ENCODE measurements at regions of chr1 and their contacts with region 1.

Region 1: DNA sequence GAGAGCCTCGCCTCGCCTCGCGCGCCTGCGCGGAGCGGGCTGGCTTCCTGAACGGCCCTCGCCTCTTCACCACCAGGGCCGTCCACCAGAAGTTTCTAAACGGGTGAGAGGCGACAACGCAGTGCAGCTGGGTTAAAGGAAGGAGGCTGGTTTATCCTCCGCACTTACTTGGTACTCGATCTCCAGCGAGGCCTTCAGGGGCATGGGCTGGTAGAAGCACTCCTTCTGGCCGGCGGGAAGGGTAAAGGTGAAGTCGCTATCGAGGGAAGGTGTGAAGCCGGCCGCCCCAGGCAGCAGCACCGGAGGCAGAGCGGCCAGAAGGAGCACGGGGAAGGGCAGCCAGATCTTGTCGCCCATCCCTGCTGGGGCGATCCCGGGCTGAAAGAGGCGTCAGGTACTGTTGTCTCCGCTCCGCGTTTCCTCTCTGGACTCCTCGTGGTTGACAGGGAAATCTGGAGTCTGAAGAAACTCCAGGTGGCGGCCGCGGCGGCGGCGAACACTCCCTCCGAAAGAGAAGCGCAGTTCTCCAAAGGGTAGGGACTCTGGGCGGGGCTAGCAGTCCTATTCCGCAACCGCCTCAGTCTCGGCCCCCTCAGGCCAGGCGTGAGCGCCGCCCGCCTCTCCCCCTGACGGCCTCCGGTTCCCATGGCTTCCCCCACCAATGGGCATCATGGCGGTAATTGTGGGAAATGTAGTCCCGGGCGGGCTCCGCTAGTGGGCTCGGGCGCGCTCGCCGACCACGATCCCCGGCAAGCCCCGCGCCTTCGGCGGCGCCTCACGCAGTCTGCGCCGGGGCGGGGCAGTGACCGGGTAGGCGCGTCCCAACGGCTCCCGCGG is at the start of gene TMED5:
- DNase-seq: peak; percentile 97 to 98 (median 98)
- H3K4me3 ChIP-seq: peak within 1 kb of the TSS; percentile 91
- H3K27ac ChIP-seq: peak within 1 kb of the TSS; percentile 82 to 100
- H3K4me1 ChIP-seq: peaks cover 5% of the 10 kb centered on the region
- H3K27me3 ChIP-seq: no peaks in the 10 kb centered on the region
- CTCF ChIP-seq: peak in 2 of 3 donors; percentile 49 to 60
- EP300 ChIP-seq: no peak
- POLR2A ChIP-seq: peak; percentile 96
- total RNA-seq, gene TMED5: 27.7 to 51.0 (median 37.1) TPM

Region 2: DNA sequence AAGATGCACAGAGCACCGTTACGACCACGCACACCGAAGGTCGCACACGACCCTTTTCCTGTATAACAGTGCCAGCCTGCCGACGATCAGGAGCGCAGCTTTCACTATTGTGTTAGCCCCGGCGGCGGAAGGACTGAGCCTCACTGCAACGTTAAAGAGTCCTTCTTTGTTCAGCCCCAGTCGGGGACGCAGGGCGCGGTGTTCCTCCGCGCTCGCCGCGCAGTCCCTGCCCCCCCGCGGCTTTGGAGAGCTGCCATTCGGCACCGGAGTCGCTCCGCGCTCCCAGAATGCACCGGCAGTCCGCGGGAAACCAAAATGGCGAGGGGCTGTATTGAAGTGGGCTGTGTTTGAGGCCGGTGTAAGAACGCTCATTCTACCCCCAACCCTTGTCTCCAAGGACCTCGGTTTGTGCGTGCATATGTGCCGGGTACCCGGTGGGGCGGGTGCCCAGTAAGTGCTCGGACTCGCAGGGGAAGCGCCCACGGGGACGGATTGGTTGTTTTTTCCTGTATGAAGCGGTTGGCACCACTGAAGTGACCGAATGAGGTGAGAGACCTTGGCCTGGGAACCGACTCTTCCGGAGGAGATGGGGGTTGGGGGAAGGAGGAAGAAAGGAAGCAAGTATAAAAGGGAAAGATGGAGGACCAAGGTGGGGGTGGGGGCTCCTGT is 101.0 kb before region 1 on chr1 and contains the start of gene MTF2:
- intact Hi-C with region 1: loop called in 1 of 4 experiments (anchors 2 kb)
- DNase-seq: peak; percentile 95 to 99 (median 98)
- H3K4me3 ChIP-seq: peak within 1 kb of the TSS; percentile 81
- H3K27ac ChIP-seq: peak within 1 kb of the TSS; percentile 68 to 70
- H3K4me1 ChIP-seq: no peaks in the 10 kb centered on the region
- H3K27me3 ChIP-seq: no peaks in the 10 kb centered on the region
- CTCF ChIP-seq: peak in 1 of 3 donors; percentile 18
- EP300 ChIP-seq: no peak
- POLR2A ChIP-seq: peak; percentile 70
- total RNA-seq, gene MTF2: 14.8 to 27.4 (median 25.2) TPM

Region 3: DNA sequence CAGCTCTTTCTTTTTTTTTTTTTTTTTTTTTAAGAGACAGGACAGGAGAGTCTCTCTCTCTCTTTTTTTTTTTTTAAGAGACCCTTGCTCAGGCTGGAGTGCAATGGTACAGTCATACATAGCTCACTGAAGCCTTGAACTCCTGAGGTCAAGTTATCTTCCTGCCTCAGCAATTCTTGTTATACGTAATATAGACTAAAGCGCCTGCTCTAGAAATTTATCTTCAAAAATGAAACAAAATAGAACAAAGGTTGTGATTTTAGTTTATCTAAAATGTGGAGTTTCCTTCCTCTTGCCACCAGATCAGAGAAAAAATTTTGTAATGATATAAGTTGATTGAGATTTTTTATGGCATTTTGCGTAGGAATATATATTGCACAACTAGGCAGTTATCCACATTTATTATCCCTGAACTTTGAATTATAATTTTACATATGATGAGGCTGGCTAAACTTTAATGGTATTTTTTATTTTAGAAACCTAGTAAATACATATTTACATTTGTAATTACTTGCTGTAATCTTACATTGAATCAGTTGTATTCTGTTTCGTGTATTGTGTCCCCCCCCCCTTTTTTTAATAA is 56.8 kb before region 1 on chr1:
- intact Hi-C with region 1: no loop called
- DNase-seq: no peak
- H3K4me3 ChIP-seq: no peak overlapping the region
- H3K27ac ChIP-seq: no peak overlapping the region
- H3K4me1 ChIP-seq: no peaks in the 10 kb centered on the region
- H3K27me3 ChIP-seq: no peaks in the 10 kb centered on the region
- CTCF ChIP-seq: no peak
- EP300 ChIP-seq: no peak
- POLR2A ChIP-seq: no peak